Cardiac septum (tissue), 1 donor: ENCODE measurements at regions of chr3 and their contacts with region 1.

Region 1: DNA sequence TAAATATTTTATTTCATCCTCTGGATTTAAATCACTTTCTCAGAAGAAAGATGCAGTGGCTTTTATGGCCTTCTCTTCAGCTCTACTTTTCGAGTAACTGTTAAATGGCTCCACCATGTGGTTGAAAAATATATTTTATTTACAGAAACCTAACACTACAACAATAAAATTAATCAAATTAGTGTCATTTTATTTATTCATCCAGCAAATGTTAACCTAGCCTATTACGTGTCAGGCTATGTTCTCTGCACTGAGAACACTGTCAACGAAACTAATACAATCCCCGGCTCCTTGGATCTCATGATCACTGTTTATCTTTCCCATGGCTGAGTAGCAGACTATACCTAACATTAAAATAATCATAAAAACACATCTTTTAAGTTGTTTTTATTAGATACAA is 148.0 kb upstream of the OSTN start:
- DNase-seq: no peak

Region 2: DNA sequence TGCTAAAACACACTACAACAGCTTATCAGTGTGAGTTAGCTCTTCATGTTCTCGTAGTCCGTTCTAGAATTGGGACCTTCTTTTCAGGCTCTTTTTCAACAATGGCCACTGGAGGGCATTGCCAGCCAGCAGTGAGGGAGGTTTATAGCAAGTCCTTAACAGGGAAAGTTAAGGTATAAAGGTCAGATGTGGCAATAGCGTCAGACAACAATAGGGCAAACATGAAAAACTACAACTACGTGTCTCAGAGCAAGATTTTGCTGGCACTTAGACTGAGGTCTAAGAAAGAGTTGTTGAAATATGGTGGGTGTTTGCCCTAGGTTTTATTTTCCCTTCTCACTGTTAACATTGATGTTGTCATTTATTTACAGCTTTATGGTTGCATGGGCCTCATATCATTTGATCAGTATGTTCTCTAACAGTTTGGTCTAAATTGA is 349.9 kb before region 1 on chr3:
- intact Hi-C with region 1: loop called (anchors 5 kb)
- DNase-seq: no peak

Region 3: GRCh38 chr3:190718671-190719070 is 332.4 kb before region 1 on chr3:
- intact Hi-C with region 1: loop called (anchors 5 kb)
- DNase-seq: no peak

Region 4: GRCh38 chr3:190811775-190812480 is 239.1 kb before region 1 on chr3:
- intact Hi-C with region 1: loop called (anchors 5 kb)
- DNase-seq: no peak

Region 5: DNA sequence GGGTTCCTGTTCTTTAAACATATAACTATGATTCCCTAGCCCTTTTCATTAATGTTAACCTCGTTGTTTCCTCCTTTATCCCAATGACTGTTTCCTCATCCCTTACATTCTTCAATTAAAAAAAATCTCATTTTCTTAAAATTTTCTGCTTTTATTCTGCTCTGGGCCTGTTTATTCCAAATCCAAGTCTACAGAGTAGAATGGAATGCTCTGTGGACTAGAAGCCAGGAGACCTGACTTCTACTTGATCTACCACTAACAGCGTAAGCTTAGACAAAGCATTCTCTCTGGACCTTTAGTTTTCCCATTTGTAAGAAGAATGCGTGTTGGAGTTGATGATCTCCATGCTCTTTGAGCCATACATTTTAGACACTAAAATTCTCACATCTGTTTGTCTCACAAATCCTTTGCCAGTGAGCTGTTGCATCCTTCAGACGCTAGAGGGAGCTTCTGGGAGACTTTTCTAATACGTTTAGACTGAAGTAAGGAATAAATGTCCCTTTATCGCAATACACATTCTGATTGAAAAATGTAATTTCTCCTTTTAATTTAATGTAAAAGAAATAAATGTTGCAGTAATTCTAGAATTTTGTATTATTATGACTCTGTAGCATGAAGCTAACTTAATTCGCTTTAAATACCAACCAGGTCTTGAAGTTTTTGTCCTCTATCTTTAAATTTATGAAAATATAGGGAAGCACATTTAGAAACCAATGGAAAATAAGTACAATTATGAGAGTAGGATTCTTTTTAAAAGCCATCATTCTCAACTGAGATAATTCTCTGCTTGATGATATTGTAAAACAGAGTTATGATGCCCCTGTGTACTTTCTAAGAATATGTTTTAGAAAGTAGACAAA is 166.8 kb before region 1 on chr3:
- intact Hi-C with region 1: loop called (anchors 5 kb)
- DNase-seq: no peak

Region 6: DNA sequence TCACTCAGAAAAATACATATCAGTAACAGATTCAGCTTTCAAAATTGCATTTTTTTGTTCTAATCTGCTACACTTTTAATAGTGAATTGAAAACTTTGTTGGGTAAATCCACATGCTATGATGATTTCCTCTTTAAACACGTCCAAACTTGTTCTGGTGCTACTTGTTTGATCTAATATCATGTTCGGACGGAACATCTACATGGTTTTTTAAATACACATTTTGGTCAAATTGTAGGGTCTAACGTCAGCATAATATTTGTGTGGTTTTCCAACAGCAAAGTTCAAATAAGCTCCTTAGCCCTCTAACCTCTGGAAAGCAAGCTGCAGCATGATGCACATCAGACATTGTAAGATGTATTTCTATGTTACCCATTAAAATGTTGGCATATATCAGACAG is 49.5 kb after region 1 on chr3:
- intact Hi-C with region 1: no loop called
- DNase-seq: no peak